ENCODE measurements at regions of chr6 and their contacts with region 1.

Region 1: DNA sequence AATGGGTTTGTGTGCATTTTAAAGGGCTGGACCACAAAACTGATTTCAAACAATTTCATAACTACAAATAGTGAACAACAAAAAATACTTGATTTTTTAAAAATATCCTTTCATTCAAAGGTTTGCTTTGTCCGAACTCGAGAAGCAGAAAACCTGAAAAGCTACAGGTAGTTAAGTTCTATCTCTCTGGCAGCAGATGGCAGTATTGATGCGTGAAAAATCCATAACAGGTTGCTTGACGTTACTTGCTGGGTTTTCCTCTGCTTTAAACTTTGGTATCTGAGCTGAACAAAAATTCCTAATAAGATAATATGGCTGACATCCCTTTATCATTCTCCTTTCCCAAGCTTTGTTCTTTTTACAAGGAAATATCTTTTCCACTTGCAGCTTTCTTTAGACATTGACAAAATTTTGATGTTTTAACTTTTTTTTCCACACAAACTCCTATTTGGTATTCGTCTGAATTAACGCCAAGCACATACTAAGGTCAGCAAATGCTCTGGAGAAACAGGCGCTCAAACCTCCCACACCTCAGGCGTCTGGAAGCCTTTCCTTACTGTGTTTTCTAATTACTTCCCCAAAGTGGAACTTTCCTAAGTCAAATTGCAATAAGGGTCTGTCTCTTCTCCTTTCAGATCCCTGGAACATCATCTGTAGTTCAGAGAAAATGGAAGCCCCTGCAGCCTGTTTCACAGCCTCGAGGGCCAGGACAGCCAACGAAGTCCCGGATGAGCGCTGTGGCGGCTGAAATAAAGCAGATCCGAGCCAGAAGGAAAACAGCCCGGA is 50.3 kb upstream of the GFRAL start:
- DNase-seq: peak; percentile 12
- H3K4me3 ChIP-seq: no peak overlapping the region
- CTCF ChIP-seq: peak; percentile 52

Region 2: DNA sequence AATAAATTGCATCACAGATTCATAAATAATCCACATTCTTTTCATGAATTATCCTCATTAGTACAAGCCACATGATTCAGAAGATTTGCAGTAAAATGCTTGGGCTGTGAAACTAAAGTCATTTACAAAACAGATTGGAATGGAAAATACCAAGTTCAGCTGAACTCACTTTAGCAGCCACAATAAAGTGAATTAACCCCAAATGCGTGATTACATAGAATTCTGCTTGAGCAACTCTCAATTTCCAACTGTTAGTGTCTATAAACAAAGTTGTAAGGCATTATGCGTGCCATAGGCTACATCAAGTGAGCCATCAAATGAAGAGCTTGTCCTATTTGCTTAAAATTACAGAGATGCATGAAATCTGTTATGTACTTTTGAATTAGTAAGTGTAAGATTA is 10.0 kb before region 1 on chr6:
- CTCF ChIA-PET with region 1: interaction called, 14 read pairs
- POLR2A ChIA-PET with region 1: no interaction called
- DNase-seq: no peak
- H3K4me3 ChIP-seq: no peak overlapping the region
- CTCF ChIP-seq: no peak

Region 3: DNA sequence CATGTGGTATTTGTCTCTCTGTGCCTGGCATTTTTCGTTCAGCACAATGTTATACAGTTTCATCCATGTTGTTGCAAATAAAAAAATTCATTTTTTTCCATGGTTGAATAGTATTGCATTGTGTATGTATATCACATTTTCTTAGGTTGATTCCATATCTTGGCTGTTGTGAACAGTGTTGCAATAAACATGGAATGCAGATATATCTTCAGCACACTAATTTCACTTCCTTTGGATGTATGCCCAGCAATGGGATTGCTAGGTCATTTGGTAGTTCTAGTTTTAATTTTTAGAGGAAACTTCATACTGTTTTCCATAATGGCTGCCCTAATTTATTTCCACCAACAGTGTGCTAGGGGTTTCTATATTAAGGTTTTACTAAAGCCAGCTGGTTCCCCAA is 103.0 kb after region 1 on chr6:
- CTCF ChIA-PET with region 1: no interaction called
- POLR2A ChIA-PET with region 1: no interaction called
- DNase-seq: no peak
- H3K4me3 ChIP-seq: no peak overlapping the region
- CTCF ChIP-seq: no peak

Region 4: GRCh38 chr6:55536391-55536956 is 259.5 kb after region 1 on chr6:
- CTCF ChIA-PET with region 1: no interaction called
- POLR2A ChIA-PET with region 1: no interaction called
- DNase-seq: no peak
- H3K4me3 ChIP-seq: no peak overlapping the region
- CTCF ChIP-seq: no peak

Region 5: DNA sequence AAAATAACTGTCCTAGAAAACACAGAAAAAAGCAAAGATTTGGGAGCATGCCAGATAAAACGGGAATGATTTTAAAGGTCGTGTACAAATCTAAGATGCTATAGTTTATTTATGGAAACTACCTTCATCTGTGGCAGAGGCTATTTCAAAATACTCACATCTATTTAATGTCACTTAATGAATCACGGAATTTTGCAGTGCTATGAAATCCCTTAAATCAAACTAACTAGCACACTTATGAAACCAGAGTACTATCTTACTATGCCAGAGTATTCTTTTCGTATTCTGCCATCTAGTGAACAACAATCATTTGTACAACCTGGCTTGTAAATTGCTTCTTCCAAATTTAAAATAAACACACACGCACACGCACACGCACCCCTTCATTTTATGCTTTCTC is 676.4 kb after region 1 on chr6:
- CTCF ChIA-PET with region 1: interaction called, 19 read pairs
- POLR2A ChIA-PET with region 1: no interaction called
- DNase-seq: peak; percentile 7
- H3K4me3 ChIP-seq: no peak overlapping the region
- CTCF ChIP-seq: no peak

Measured in AG04449 (cell line).